ENCODE measurements at regions of chr11 and their contacts with region 1.

Region 1: DNA sequence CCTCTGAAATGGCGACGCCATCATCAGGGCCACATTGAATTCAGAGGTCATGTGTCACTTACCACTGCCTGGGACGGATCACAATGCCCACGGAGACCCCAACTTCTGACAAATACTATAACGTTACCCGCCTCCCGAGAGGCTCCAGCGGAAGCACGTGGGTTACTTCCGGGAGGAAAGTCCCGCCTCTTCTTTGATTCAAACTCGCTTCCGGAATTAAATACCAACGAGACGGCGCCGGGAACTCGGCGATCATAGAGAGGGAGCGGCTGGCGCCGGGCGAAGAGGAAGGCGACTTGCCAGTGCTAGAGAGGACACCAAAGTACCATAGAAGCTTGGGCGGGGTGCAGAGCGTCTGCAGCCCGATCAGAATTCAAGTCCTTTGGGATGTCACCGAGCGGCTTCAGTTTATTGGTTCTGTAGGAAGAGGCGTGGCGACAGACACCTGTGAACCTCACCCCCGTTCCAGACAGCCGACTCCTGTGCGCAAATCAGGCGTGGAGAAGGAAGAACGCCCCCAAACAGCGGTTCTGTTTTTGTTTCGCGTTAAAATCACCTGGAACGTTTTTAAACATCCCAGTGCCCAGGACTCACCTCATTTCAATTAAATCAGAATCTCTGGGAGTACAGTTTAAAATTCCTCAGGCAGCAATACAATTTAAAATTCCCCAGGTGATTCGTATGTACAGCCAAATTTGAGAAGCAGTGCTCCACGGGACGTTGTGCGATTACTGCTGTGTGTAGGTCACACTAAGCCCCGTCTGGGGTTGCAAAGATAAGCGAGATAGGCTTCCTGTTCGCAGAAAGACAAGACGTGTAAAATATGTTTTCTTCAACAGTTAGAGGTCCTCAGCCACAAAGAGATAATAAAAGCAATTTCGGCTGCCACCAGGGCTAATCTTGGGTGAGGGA is at the start of gene TIMM10:
- DNase-seq: peak; percentile 97
- ATAC-seq: peak; percentile 97
- H3K4me3 Mint-ChIP-seq: peak within 1 kb of the TSS; percentile 77
- H3K27ac Mint-ChIP-seq: peak within 1 kb of the TSS; percentile 79
- H3K4me1 Mint-ChIP-seq: peaks cover 41% of the 10 kb centered on the region
- H3K27me3 Mint-ChIP-seq: no peaks in the 10 kb centered on the region
- total RNA-seq, gene TIMM10: 74.5 to 92.9 TPM

Region 2: GRCh38 chr11:57345555-57346211 is 185.2 kb before region 1 on chr11:
- CTCF ChIA-PET with region 1: interaction called, 13 read pairs
- DNase-seq: peak; percentile 71
- ATAC-seq: peak; percentile 65
- H3K4me3 Mint-ChIP-seq: no peak overlapping the region
- H3K27ac Mint-ChIP-seq: no peak overlapping the region
- H3K4me1 Mint-ChIP-seq: peaks cover 3% of the 10 kb centered on the region
- H3K27me3 Mint-ChIP-seq: no peaks in the 10 kb centered on the region

Region 3: DNA sequence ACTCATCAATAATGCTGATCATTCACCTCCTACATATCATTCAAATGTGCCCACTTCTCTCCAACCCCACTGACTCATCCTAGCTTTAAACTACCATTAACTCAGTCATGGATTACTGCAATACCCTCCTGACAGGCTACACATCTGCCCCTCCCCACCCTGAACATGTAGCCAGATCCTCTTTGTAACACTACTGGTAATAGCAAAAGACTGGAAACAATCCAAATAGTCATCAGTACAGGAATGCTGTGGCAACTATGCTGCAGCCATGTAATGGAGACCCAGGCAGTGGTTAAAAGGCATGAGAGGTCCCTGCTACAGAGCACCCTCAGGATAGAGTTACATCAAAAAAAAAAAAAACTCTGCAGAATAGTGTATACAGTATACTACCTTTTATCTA is 120.6 kb before region 1 on chr11:
- CTCF ChIA-PET with region 1: no interaction called
- DNase-seq: no peak
- ATAC-seq: no peak
- H3K4me3 Mint-ChIP-seq: no peak overlapping the region
- H3K27ac Mint-ChIP-seq: no peak overlapping the region
- H3K4me1 Mint-ChIP-seq: peaks cover 50% of the 10 kb centered on the region
- H3K27me3 Mint-ChIP-seq: no peaks in the 10 kb centered on the region

Region 4: GRCh38 chr11:57480409-57481137 is 50.3 kb before region 1 on chr11:
- CTCF ChIA-PET with region 1: interaction called, 79 read pairs
- DNase-seq: peak; percentile 86
- ATAC-seq: peak; percentile 70
- H3K4me3 Mint-ChIP-seq: no peak overlapping the region
- H3K27ac Mint-ChIP-seq: no peak overlapping the region
- H3K4me1 Mint-ChIP-seq: peaks cover 15% of the 10 kb centered on the region
- H3K27me3 Mint-ChIP-seq: peaks cover 49% of the 10 kb centered on the region

Region 5: GRCh38 chr11:57508341-57509170 is 22.3 kb before region 1 on chr11:
- CTCF ChIA-PET with region 1: interaction called, 107 read pairs
- DNase-seq: no peak
- ATAC-seq: no peak
- H3K4me3 Mint-ChIP-seq: no peak overlapping the region
- H3K27ac Mint-ChIP-seq: no peak overlapping the region
- H3K4me1 Mint-ChIP-seq: peaks cover 32% of the 10 kb centered on the region
- H3K27me3 Mint-ChIP-seq: no peaks in the 10 kb centered on the region

Region 6: DNA sequence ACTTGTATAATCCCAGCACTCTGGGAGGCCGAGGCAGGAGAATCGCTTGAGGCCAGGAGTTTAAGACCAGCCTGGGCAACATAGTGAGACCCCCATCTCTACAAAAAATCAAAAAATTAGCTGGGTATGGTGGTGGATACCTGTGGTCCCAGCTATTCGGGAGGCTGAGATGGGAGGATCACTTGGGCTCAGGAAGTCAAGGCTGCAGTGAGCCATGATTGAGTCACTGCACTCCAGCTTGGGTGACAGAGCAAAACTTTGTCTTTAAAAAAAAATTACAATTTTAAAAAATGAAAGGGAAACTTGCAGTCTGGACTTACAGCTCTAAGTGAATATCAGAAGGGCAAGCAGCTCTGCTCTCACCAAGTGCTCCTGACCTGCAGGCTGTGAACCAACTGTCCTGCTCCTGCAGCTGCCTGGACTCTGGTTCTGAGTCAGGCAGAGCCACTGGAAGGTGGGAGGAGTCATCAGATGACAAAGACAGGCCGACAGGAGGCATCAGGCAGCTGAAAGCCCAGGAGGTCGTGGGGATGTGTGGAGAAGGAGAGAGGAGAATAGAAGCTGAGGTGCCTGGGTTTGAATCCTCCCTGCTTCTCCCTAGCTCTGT is 16.1 kb after region 1 on chr11:
- CTCF ChIA-PET with region 1: interaction called, 11 read pairs
- DNase-seq: no peak
- ATAC-seq: peak; percentile 61
- H3K4me3 Mint-ChIP-seq: no peak overlapping the region
- H3K27ac Mint-ChIP-seq: peak overlapping the region; percentile 22
- H3K4me1 Mint-ChIP-seq: peaks cover 20% of the 10 kb centered on the region
- H3K27me3 Mint-ChIP-seq: no peaks in the 10 kb centered on the region

Measured in activated CD8-positive, alpha-beta memory T cell treated with anti-CD3 and anti-CD28 coated beads, Interleukin-2, amount 10 ng/mL, durations not matched to agents 7 days and 5 days (primary cell).